Posterior vena cava (tissue), 2 donors: ENCODE measurements at regions of chr3 and their contacts with region 1.

Region 1: DNA sequence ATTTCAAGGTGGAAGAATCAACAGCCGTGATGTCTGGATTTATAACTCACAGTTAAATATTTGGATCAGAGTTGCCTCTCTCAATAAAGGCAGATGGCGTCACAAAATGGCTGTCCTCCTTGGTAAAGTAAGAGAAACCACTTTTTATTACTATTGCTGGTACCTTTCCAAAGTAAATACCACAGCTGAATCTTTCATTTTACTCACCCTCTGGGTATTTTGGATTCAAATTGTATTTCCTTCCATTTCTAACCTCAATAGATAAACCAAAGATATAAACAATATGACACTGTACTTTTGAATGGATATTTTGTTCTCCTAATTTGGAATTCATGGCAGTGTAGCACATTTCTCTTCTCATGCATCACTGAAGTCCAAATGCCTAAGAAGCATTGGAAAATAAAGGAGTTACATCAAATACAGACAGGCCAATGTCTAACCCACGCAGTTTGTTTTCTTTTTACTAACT is 29.5 kb downstream of the KLHL24 start:
- DNase-seq: no peak

Region 2: DNA sequence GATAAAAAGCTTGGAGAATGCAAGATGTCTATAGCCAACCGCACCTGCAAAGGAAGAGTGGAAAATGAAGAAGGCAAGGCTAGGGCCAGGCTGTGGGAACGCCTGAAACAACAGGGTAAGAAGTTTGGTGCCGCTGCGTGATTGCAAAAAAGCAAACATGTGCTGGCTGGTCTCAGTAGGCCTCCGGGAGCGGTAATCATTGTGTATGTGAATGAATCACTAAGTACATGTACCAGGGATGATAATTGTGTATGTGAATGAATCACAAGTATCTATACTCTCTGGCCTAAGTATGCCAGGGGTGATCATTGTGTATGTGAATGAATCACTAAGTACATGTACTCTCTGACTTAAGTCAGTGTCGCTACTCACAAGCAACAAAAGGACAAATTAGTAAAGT is 260.0 kb after region 1 on chr3:
- intact Hi-C with region 1: loop called in 1 of 2 experiments (anchors 5 kb)
- DNase-seq: no peak